ENCODE measurements at regions of chr5 and their contacts with region 1.

Region 1: DNA sequence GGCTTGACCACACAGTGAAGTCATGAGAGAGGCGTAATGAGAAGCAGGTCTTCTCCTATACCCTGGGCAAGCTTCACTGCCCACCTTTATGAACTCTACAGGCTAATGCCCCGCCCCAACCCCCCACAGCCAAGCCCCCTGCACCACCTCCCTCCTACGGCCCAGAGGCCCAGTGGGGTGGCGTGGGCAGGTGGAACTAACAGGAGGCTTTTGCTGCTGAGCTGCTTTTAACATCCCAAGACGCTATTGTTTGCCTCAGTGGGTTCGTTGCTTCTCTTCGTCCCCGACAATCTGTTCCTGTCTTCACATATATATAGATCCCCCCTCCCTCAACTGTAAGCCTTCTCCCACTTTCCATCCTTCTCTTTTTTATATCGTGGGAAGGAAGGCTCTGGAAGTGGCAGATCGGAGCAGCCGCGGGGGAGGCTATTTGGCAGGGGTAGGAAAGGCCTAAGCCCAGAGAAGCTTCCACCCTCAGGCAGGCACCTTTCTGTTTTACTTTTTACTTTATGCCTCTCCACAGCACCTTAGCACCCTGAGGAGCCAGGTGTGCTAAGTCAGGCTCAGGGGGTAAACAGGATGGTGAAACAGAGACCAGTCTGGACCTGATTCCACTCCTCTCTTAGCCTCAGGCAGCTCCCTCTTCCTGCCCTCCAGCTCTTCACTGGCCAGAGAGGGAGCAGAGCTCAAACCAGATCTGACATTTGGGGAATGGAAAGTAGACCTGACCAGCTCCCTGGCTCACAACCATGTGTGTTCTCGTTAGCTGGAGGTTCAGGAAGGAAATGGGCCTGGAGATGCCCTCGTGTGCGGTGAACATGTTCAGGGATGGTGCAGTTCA is 26.5 kb downstream of the CD74 start:
- DNase-seq: no peak
- ATAC-seq: no peak
- H3K4me3 ChIP-seq: no peak overlapping the region
- H3K27ac ChIP-seq: no peak overlapping the region
- H3K4me1 ChIP-seq: no peaks in the 10 kb centered on the region
- H3K27me3 ChIP-seq: no peaks in the 10 kb centered on the region
- CTCF ChIP-seq: no peak

Region 2: GRCh38 chr5:149894237-149894636 is 492.0 kb before region 1 on chr5:
- CTCF ChIA-PET with region 1: no interaction called
- POLR2A ChIA-PET with region 1: interaction called, 11 read pairs
- in situ Hi-C with region 1: no loop called
- intact Hi-C with region 1: no loop called
- DNase-seq: no peak
- ATAC-seq: no peak
- H3K4me3 ChIP-seq: no peak overlapping the region
- H3K27ac ChIP-seq: no peak overlapping the region
- H3K4me1 ChIP-seq: no peaks in the 10 kb centered on the region
- H3K27me3 ChIP-seq: no peaks in the 10 kb centered on the region
- CTCF ChIP-seq: no peak

Measured in Panc1 (cell line).